Stomach (tissue), 19 donors: ENCODE measurements at regions of chr12 and their contacts with region 1.

Region 1: GRCh38 chr12:110600254-110600653 is 13.7 kb upstream of the TCTN1 start:
- DNase-seq: peak in 1 of 2 donors; percentile 67
- H3K4me3 ChIP-seq: no peak overlapping the region
- H3K27ac ChIP-seq: no peak overlapping the region
- H3K4me1 ChIP-seq: peaks cover 0 to 8% (median 3%) of the 10 kb centered on the region in 4 donors
- H3K27me3 ChIP-seq: no peaks in the 10 kb centered on the region
- CTCF ChIP-seq: peak in 4 of 7 experiments; percentile 7 to 55 (median 42)
- EP300 ChIP-seq: no peak
- POLR2A ChIP-seq: no peak

Region 2: DNA sequence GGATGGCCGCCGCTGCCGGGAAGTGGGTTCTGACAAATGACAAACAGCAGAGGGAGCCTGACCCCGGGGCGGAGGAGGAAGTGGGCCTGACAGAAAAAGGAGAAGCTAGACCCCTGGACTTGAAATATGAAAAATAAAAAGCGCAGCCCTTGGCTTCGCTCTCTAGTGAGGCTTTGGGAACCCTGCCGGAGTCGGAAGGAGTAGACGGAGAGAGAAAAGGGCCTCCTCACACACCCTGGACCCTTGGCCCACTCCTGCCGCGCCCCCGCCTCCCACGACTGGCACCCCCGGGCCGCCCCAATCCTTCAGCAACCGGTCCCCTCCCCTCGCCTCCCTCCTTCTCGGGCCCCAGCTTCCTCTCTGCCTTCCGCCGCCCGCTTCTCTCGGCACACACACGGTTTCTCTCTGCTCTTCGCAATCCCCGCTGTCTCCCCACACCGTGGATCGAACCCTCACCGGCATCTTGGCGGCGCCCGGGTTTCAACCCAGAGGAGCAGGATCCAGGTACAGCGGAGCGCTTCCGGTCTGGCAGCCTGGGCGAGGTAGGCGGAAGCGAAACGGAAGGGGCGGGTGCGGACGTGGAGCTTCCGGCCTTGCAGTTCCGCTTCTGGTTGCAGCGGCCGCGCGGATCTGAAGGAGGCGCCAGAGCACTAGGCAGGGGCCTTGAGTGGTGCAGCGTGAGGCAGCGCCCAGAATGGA is 150.3 kb before region 1 on chr12 and contains the start of gene ARPC3:
- intact Hi-C with region 1: loop called (anchors 10 kb)
- DNase-seq: peak; percentile 96 to 99
- H3K4me3 ChIP-seq: peak within 1 kb of the TSS; percentile 89 to 98 (median 94)
- H3K27ac ChIP-seq: peak within 1 kb of the TSS; percentile 93 to 99 (median 98)
- H3K4me1 ChIP-seq: peaks cover 19 to 50% (median 33%) of the 10 kb centered on the region in 4 donors
- H3K27me3 ChIP-seq: no peaks in the 10 kb centered on the region
- CTCF ChIP-seq: peak in 5 of 7 experiments; percentile 72 to 87 (median 77)
- EP300 ChIP-seq: no peak
- POLR2A ChIP-seq: peak in 1 of 4 donors; percentile 13
- total RNA-seq, gene ARPC3: 44.0 to 220 (median 148) TPM

Region 3: DNA sequence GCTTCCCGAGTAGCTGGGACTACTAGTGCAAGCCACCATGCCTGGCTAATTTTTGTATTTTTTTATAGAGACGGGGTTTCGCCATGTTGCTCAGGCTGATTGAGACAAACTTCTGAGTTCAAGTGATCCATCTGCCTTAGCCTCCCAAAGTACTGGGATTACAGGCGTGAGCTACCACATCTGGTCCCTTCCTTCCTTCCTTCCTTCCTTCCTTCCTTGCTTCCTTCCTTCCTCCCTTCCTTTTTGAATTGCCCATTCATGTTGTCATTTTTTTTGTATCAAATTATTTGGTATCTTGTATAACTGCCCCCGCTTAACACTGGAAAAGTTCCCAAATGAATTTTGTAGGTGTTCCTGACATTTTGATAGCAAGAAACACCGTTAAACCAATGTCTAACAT is 86.4 kb before region 1 on chr12:
- intact Hi-C with region 1: loop called (anchors 5 kb)
- DNase-seq: no peak
- H3K4me3 ChIP-seq: no peak overlapping the region
- H3K27ac ChIP-seq: no peak overlapping the region
- H3K4me1 ChIP-seq: peaks cover 0 to 7% (median 3%) of the 10 kb centered on the region in 4 donors
- H3K27me3 ChIP-seq: no peaks in the 10 kb centered on the region
- CTCF ChIP-seq: no peak
- EP300 ChIP-seq: no peak
- POLR2A ChIP-seq: no peak

Region 4: GRCh38 chr12:110829288-110829687 is 229.0 kb after region 1 on chr12:
- intact Hi-C with region 1: no loop called
- DNase-seq: no peak
- H3K4me3 ChIP-seq: no peak overlapping the region
- H3K27ac ChIP-seq: no peak overlapping the region
- H3K4me1 ChIP-seq: peaks cover 0 to 6% (median 0%) of the 10 kb centered on the region in 4 donors
- H3K27me3 ChIP-seq: peaks cover 0 to 12% (median 0%) of the 10 kb centered on the region in 3 donors
- CTCF ChIP-seq: no peak
- EP300 ChIP-seq: no peak
- POLR2A ChIP-seq: no peak